PC-3 (cell line): ENCODE measurements at regions of chr4 and their contacts with region 1.

Region 1: DNA sequence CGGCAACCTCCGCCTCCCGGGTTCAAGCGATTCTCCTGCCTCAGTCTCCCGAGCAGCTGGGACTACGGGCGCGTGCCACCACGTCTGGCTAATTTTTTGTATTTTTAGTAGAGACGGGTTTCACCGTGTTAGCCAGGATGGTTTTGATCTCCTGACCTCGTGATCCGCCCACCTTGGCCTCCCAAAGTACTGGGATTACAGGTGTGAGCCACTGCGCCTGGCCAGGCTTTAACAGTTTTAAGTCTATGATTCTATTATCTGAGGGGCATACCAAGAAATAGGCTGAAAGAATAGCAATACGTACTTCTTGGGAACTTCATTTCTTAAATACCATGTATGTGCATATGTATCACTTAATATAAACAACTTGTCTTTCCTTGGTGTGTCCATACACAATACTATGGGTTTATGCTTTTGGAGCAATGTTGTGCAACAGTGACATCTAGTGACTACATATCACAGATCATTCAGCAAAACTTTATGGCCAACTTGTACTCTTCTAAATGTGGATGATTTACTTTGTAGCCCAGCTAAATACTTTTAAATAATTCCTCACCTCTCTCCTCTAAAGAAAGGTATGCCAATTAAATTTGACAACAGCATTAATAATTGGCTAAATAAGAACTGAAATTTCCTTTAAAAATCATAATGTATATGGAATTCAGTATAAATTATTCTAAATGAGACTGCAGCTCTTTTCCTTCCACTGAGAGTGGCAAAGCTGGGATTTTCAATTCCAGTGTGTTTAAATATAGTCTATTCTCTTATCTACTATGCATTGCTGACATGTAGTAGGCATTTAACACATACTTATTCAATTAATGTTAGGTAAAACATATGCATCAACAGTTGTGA is 10.4 kb downstream of the SLC9B1 start:
- DNase-seq: peak; percentile 73
- ATAC-seq: peak; percentile 77
- H3K4me3 ChIP-seq: no peak overlapping the region
- H3K27ac ChIP-seq: no peak overlapping the region
- H3K4me1 ChIP-seq: peaks cover 12% of the 10 kb centered on the region
- H3K27me3 ChIP-seq: no peaks in the 10 kb centered on the region
- CTCF ChIP-seq: peak; percentile 80

Region 2: GRCh38 chr4:102449751-102450352 is 559.2 kb before region 1 on chr4:
- CTCF ChIA-PET with region 1: no interaction called
- POLR2A ChIA-PET with region 1: no interaction called
- intact Hi-C with region 1: loop called (anchors 2 kb)
- DNase-seq: peak; percentile 73
- ATAC-seq: peak; percentile 71
- H3K4me3 ChIP-seq: no peak overlapping the region
- H3K27ac ChIP-seq: no peak overlapping the region
- H3K4me1 ChIP-seq: no peaks in the 10 kb centered on the region
- H3K27me3 ChIP-seq: no peaks in the 10 kb centered on the region
- CTCF ChIP-seq: peak; percentile 75

Region 3: GRCh38 chr4:102620697-102621497 is 388.2 kb before region 1 on chr4:
- CTCF ChIA-PET with region 1: no interaction called
- POLR2A ChIA-PET with region 1: no interaction called
- intact Hi-C with region 1: loop called (anchors 1 kb)
- DNase-seq: peak; percentile 78
- ATAC-seq: peak; percentile 90
- H3K4me3 ChIP-seq: peak overlapping the region; percentile 60
- H3K27ac ChIP-seq: peak overlapping the region; percentile 68
- H3K4me1 ChIP-seq: peaks cover 24% of the 10 kb centered on the region
- H3K27me3 ChIP-seq: no peaks in the 10 kb centered on the region
- CTCF ChIP-seq: peak; percentile 86

Region 4: GRCh38 chr4:102780476-102781144 is 228.5 kb before region 1 on chr4:
- CTCF ChIA-PET with region 1: no interaction called
- POLR2A ChIA-PET with region 1: no interaction called
- intact Hi-C with region 1: loop called (anchors 10 kb)
- DNase-seq: peak; percentile 89
- ATAC-seq: peak; percentile 94
- H3K4me3 ChIP-seq: no peak overlapping the region
- H3K27ac ChIP-seq: peak overlapping the region; percentile 45; the same call in 1 of the 2 replicates
- H3K4me1 ChIP-seq: peaks cover 14% of the 10 kb centered on the region
- H3K27me3 ChIP-seq: no peaks in the 10 kb centered on the region
- CTCF ChIP-seq: no peak

Region 5: GRCh38 chr4:102868781-102869568 is 140.1 kb before region 1 on chr4 and contains the start of gene CISD2:
- CTCF ChIA-PET with region 1: no interaction called
- POLR2A ChIA-PET with region 1: no interaction called
- intact Hi-C with region 1: loop called (anchors 5 kb)
- DNase-seq: peak; percentile 80
- ATAC-seq: peak; percentile 90
- H3K4me3 ChIP-seq: peak within 1 kb of the TSS; percentile 77
- H3K27ac ChIP-seq: peak within 1 kb of the TSS; percentile 70
- H3K4me1 ChIP-seq: peaks cover 27% of the 10 kb centered on the region
- H3K27me3 ChIP-seq: no peaks in the 10 kb centered on the region
- CTCF ChIP-seq: no peak
- total RNA-seq, gene CISD2: 30.9 and 36.9 TPM in 2 replicates